Activated naive CD4-positive, alpha-beta T cell treated with anti-CD3 and anti-CD28 coated beads for 36 hours (primary cell): ENCODE measurements at regions of chr14 and their contacts with region 1.

Region 1: DNA sequence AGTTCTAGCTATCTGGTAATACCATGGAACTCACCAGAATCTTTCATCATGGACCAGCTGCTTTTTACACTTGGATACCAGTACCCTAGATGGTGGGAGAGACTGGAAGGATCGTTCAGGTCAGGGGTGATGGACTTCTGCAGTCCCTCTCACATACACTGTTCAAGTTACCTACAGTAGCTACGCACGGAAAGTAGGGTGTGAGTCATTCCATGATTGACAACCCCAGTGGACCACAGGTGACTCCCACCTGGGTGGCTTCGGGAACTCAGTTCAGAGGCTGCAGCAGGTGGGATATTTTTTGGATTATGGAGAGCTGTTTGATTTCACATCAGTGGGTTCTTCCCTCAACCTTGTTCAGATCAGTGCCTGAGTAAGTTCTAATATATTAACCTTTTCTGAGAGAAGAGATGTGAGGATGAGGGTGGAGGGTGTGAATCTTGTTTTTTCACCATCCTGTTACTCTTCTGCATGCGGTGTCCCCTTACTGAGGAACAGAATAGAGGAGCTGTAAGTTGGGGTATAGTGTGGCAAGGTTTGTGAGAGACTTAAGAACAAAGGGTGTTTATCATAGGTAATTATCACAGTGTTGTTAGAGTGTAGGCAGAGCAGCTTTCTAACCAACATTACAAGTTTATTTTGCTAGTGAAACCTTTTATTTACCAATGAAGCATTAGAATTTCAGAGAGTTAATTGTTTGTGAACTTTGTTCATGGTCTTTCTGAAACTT is 39.6 kb downstream of the PRKCH start:
- DNase-seq: no peak
- H3K4me3 Mint-ChIP-seq: no peak overlapping the region
- H3K27ac Mint-ChIP-seq: peak overlapping the region; percentile 58
- H3K4me1 Mint-ChIP-seq: peaks cover 55% of the 10 kb centered on the region
- H3K27me3 Mint-ChIP-seq: no peaks in the 10 kb centered on the region

Region 2: GRCh38 chr14:60878536-60878935 is 482.4 kb before region 1 on chr14:
- CTCF ChIA-PET with region 1: no interaction called
- intact Hi-C with region 1: no loop called
- DNase-seq: no peak
- H3K4me3 Mint-ChIP-seq: no peak overlapping the region
- H3K27ac Mint-ChIP-seq: no peak overlapping the region
- H3K4me1 Mint-ChIP-seq: peaks cover 9% of the 10 kb centered on the region
- H3K27me3 Mint-ChIP-seq: no peaks in the 10 kb centered on the region

Region 3: GRCh38 chr14:61372842-61373555 is 12.0 kb after region 1 on chr14:
- CTCF ChIA-PET with region 1: interaction called, 16 read pairs
- intact Hi-C with region 1: loop called (anchors 1 kb)
- DNase-seq: peak; percentile 45
- H3K4me3 Mint-ChIP-seq: no peak overlapping the region
- H3K27ac Mint-ChIP-seq: peak overlapping the region; percentile 84
- H3K4me1 Mint-ChIP-seq: peaks cover 87% of the 10 kb centered on the region
- H3K27me3 Mint-ChIP-seq: no peaks in the 10 kb centered on the region

Region 4: DNA sequence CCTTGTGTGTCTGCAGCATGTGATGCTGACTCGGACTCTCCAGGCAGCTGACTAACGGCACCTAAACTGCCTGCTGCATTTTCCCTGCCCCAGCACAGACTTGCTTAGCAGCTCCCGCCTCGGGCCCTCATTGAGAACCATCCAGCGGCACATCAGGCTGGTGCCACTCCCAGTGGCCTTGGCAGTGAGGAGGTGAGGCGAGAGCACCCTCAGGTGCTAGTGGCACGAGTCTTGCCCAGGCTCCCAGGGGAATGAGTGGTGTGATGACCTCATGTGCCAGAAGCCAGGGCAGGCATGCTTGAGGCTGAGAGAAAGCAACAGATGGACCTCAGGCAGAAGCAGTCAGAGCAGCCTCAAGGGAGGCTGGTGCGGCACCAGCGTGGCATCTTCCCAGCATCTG is 20.6 kb after region 1 on chr14:
- CTCF ChIA-PET with region 1: interaction called, 16 read pairs
- intact Hi-C with region 1: loop called (anchors 1 kb)
- DNase-seq: no peak
- H3K4me3 Mint-ChIP-seq: no peak overlapping the region
- H3K27ac Mint-ChIP-seq: peak overlapping the region; percentile 70
- H3K4me1 Mint-ChIP-seq: peaks cover 15% of the 10 kb centered on the region
- H3K27me3 Mint-ChIP-seq: no peaks in the 10 kb centered on the region

Region 5: GRCh38 chr14:61512026-61512834 is 151.3 kb after region 1 on chr14:
- CTCF ChIA-PET with region 1: no interaction called
- intact Hi-C with region 1: no loop called
- DNase-seq: peak; percentile 46
- H3K4me3 Mint-ChIP-seq: peak overlapping the region; percentile 56
- H3K27ac Mint-ChIP-seq: peak overlapping the region; percentile 100
- H3K4me1 Mint-ChIP-seq: peaks cover 95% of the 10 kb centered on the region
- H3K27me3 Mint-ChIP-seq: no peaks in the 10 kb centered on the region

Region 6: DNA sequence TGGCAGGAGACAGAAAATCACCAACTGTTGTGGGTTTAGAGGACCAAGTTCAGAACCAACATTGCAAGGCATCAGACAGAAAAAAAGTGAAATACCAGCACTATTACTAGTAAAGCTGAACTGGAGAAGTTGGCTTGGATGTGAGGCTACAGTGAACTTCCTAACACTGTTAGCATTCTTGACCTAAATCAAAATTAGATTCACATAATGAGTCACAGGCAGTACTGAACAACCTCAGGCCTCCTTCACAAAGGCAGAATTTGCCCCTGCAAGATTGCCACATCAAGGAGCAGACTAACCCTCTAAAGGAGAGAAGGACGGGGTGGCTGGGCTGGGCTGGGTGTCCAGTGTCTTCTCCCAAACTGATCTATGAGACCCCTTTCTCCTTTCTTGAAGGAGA is 941.0 kb after region 1 on chr14:
- CTCF ChIA-PET with region 1: no interaction called
- intact Hi-C with region 1: no loop called
- DNase-seq: no peak
- H3K4me3 Mint-ChIP-seq: no peak overlapping the region
- H3K27ac Mint-ChIP-seq: no peak overlapping the region
- H3K4me1 Mint-ChIP-seq: no peaks in the 10 kb centered on the region
- H3K27me3 Mint-ChIP-seq: peaks cover 3% of the 10 kb centered on the region